Activated B cell treated with CpG ODN at 0.5 μM for 24 hours (primary cell): ENCODE measurements at regions of chr17 and their contacts with region 1.

Region 1: DNA sequence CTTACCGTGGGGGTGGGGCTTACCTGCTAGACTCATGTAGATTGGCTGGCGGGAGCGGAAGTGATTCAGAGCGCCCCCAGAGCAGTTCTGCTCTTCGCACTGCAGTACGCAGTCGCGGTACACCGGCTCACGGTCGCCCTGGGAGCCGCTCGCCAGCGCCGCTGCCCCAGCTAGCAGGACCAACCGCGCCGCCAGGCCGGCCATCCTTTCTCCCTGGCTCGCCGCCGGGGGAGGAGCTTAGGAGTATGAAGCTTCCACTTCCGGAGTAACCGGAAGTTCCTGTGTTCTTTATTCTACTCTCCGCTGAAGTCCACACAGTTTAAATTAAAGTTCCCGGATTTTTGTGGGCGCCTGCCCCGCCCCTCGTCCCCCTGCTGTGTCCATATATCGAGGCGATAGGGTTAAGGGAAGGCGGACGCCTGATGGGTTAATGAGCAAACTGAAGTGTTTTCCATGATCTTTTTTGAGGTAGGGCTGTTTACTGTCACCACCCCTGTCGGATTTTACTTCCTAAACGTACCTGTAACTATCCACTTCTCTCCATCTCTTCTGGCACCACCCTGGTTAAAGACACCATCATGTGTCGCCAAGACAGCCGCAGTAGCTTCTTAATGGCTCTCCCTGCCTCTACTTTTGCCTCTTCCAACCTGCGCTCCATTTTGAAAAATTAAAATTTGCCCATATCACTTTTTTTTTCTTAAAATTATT is at the start of gene PGAP3:
- DNase-seq: peak; percentile 78
- ATAC-seq: peak; percentile 95
- H3K4me3 Mint-ChIP-seq: peak within 1 kb of the TSS; percentile 99
- H3K27ac Mint-ChIP-seq: peak within 1 kb of the TSS; percentile 97
- H3K4me1 Mint-ChIP-seq: peaks cover 18% of the 10 kb centered on the region
- H3K27me3 Mint-ChIP-seq: no peaks in the 10 kb centered on the region
- CTCF ChIP-seq: no peak
- total RNA-seq, gene PGAP3: 19.0 and 24.0 TPM in 2 replicates

Region 2: GRCh38 chr17:39636927-39637736 is 50.8 kb before region 1 on chr17 and contains the start of gene STARD3:
- CTCF ChIA-PET with region 1: no interaction called
- POLR2A ChIA-PET with region 1: interaction called, 6 read pairs
- intact Hi-C with region 1: loop called (anchors 1 kb)
- DNase-seq: peak; percentile 90
- ATAC-seq: peak; percentile 92
- H3K4me3 Mint-ChIP-seq: peak within 1 kb of the TSS; percentile 90
- H3K27ac Mint-ChIP-seq: peak within 1 kb of the TSS; percentile 86
- H3K4me1 Mint-ChIP-seq: peaks cover 63% of the 10 kb centered on the region
- H3K27me3 Mint-ChIP-seq: no peaks in the 10 kb centered on the region
- CTCF ChIP-seq: no peak
- total RNA-seq, gene STARD3: 51.8 and 58.2 TPM in 2 replicates

Region 3: GRCh38 chr17:39668199-39668966 is 19.6 kb before region 1 on chr17 and contains the start of gene PNMT:
- CTCF ChIA-PET with region 1: interaction called, 3 read pairs
- POLR2A ChIA-PET with region 1: interaction called, 19 read pairs
- intact Hi-C with region 1: no loop called
- DNase-seq: peak; percentile 70
- ATAC-seq: peak; percentile 83
- H3K4me3 Mint-ChIP-seq: peak within 1 kb of the TSS; percentile 71
- H3K27ac Mint-ChIP-seq: peak within 1 kb of the TSS; percentile 56
- H3K4me1 Mint-ChIP-seq: peaks cover 31% of the 10 kb centered on the region
- H3K27me3 Mint-ChIP-seq: peaks cover 12% of the 10 kb centered on the region
- CTCF ChIP-seq: peak; percentile 44
- total RNA-seq, gene PNMT: not detected in 2 replicates

Region 4: GRCh38 chr17:39676198-39676819 is 11.7 kb before region 1 on chr17:
- CTCF ChIA-PET with region 1: interaction called, 4 read pairs
- POLR2A ChIA-PET with region 1: interaction called, 23 read pairs
- intact Hi-C with region 1: no loop called
- DNase-seq: no peak
- ATAC-seq: peak; percentile 51
- H3K4me3 Mint-ChIP-seq: peak overlapping the region; percentile 29
- H3K27ac Mint-ChIP-seq: peak overlapping the region; percentile 90
- H3K4me1 Mint-ChIP-seq: peaks cover 87% of the 10 kb centered on the region
- H3K27me3 Mint-ChIP-seq: no peaks in the 10 kb centered on the region
- CTCF ChIP-seq: no peak

Region 5: DNA sequence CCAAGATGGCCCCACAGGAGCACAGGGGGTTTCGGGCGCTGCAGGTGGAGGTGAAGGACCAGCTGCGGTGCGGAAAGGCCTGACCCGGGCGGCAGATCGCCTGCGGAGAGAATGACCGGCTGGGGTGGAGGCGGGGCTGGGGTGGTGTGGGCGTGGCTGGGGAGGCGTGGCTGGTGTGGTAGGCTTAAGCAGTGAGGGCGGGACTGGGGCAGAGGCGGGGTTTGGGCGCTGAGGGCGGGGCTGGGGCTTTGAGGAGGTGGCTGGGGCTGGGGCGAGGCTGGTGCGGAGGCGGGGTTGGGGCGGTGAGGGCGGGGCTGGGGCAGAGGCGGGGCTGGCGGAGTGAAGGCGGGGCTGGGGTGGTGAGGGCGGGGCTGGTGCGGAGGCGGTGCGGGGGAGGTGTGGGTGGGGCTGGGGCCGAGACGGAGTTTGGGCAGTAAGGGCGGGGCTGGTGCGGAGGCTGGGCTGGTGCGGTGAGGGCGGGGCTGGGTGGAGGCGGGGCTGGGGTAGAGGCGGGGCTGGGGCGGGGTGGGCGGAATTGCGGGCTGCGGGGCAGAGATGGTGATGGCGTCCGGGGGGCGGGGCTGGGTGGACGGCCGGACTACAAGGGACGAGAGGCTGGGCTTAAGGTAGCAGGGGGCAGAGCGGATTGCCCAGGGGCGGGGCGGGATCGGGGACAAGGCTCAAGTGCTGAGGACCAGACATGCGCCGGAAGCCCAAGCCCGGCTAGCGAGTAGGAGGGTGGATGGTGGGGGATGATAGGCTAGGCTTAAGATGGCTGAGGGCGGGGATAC is 264.9 kb after region 1 on chr17:
- CTCF ChIA-PET with region 1: no interaction called
- POLR2A ChIA-PET with region 1: no interaction called
- intact Hi-C with region 1: loop called (anchors 5 kb)
- DNase-seq: peak; percentile 88
- ATAC-seq: peak; percentile 85
- H3K4me3 Mint-ChIP-seq: peak overlapping the region; percentile 85
- H3K27ac Mint-ChIP-seq: peak overlapping the region; percentile 83
- H3K4me1 Mint-ChIP-seq: peaks cover 29% of the 10 kb centered on the region
- H3K27me3 Mint-ChIP-seq: no peaks in the 10 kb centered on the region
- CTCF ChIP-seq: no peak